ENCODE measurements at regions of chr4 and their contacts with region 1.

Region 1: DNA sequence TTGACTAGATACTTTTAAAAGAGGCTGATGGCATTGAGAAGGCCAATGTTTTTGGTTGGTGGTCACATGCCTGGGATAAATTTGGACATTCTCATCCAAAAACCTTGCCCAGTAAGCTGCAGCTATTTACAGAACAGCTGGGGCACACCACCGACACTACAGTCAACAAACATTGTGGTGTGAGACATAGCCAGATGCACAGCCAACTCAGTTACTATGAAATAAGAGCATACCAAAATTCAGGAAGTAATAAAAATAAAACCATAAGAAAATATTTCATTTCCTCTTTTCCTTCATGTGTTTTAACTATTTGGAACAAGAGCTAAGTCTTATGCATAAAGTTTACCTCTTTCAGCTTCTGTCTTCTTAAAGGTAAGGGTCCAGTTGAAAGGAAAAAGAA is 8.8 kb downstream of the PPM1K start:
- DNase-seq: peak; percentile 72
- ATAC-seq: peak; percentile 91
- H3K4me3 ChIP-seq: peak overlapping the region in 3 of 5 experiments; percentile 1 to 45 (median 13)
- H3K4me3 Mint-ChIP-seq: peak overlapping the region; percentile 80
- H3K27ac ChIP-seq: peak overlapping the region; percentile 22 to 52
- H3K27ac Mint-ChIP-seq: peak overlapping the region; percentile 82
- H3K4me1 ChIP-seq: peaks cover 59 to 65% of the 10 kb centered on the region in 2 donors
- H3K4me1 Mint-ChIP-seq: peaks cover 68% of the 10 kb centered on the region
- H3K27me3 ChIP-seq: no peaks in the 10 kb centered on the region
- H3K27me3 Mint-ChIP-seq: no peaks in the 10 kb centered on the region
- CTCF ChIP-seq: no peak

Region 2: GRCh38 chr4:88244816-88245579 is 30.5 kb before region 1 on chr4:
- CTCF ChIA-PET with region 1: no interaction called
- POLR2A ChIA-PET with region 1: no interaction called
- intact Hi-C with region 1: loop called (anchors 5 kb)
- DNase-seq: no peak
- ATAC-seq: peak; percentile 83
- H3K4me3 ChIP-seq: peak overlapping the region in 3 of 5 experiments; percentile 23 to 31 (median 29)
- H3K4me3 Mint-ChIP-seq: peak overlapping the region; percentile 79
- H3K27ac ChIP-seq: no peak overlapping the region
- H3K27ac Mint-ChIP-seq: peak overlapping the region; percentile 67
- H3K4me1 ChIP-seq: peaks cover 9% of the 10 kb centered on the region in 2 donors
- H3K4me1 Mint-ChIP-seq: peaks cover 13% of the 10 kb centered on the region
- H3K27me3 ChIP-seq: no peaks in the 10 kb centered on the region
- H3K27me3 Mint-ChIP-seq: no peaks in the 10 kb centered on the region
- CTCF ChIP-seq: no peak

Measured in B cell (primary cell).